PC-3 (cell line): ENCODE measurements at regions of chr4 and their contacts with region 1.

Region 1: DNA sequence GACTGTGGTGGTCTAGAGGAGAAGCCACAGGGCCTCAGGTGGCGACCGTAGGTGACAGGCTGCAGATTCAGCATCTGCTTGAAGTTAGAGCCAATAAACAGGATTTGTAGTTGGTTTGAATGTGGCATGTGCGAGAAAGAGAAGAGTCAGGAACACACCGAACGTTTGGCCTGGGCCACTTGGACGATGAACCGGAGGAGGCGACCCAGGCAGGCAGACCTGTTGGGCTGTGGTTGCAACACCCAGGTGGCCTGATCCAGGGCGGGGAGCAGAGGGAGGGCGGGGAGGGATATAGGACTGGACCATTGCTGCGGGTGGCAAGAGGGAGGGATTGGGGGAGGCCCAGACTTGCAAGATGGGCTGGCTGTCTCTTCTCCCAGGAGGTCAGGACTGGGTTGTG is 10.0 kb upstream of the PSAPL1 start:
- DNase-seq: no peak
- ATAC-seq: no peak
- H3K4me3 ChIP-seq: no peak overlapping the region
- H3K27ac ChIP-seq: no peak overlapping the region
- H3K4me1 ChIP-seq: no peaks in the 10 kb centered on the region
- H3K27me3 ChIP-seq: no peaks in the 10 kb centered on the region
- CTCF ChIP-seq: no peak

Region 2: GRCh38 chr4:7529368-7530080 is 84.8 kb after region 1 on chr4:
- CTCF ChIA-PET with region 1: interaction called, 11 read pairs
- POLR2A ChIA-PET with region 1: no interaction called
- intact Hi-C with region 1: no loop called
- DNase-seq: no peak
- ATAC-seq: no peak; the same call in 1 of the 2 replicates
- H3K4me3 ChIP-seq: no peak overlapping the region
- H3K27ac ChIP-seq: no peak overlapping the region
- H3K4me1 ChIP-seq: no peaks in the 10 kb centered on the region
- H3K27me3 ChIP-seq: no peaks in the 10 kb centered on the region
- CTCF ChIP-seq: no peak

Region 3: GRCh38 chr4:7719354-7720174 is 274.8 kb after region 1 on chr4:
- CTCF ChIA-PET with region 1: no interaction called
- POLR2A ChIA-PET with region 1: no interaction called
- intact Hi-C with region 1: no loop called
- DNase-seq: peak; percentile 54
- ATAC-seq: peak; percentile 77
- H3K4me3 ChIP-seq: peak overlapping the region; percentile 28; the same call in 1 of the 2 replicates
- H3K27ac ChIP-seq: no peak overlapping the region
- H3K4me1 ChIP-seq: 0 out of 2 replicates have a peak, but pooled peaks cover 3% of the 10 kb centered on the region
- H3K27me3 ChIP-seq: no peaks in the 10 kb centered on the region
- CTCF ChIP-seq: peak; percentile 79